Activated CD4-positive, alpha-beta memory T cell treated with anti-CD3 and anti-CD28 coated beads, Interleukin-2, amount 10 ng/mL, durations not matched to agents 7 days and 5 days (primary cell): ENCODE measurements at regions of chr1 and their contacts with region 1.

Region 1: GRCh38 chr1:108559215-108560186 is at the start of gene EEIG2:
- DNase-seq: peak; percentile 93
- H3K4me3 Mint-ChIP-seq: peak within 1 kb of the TSS; percentile 95
- H3K27ac Mint-ChIP-seq: peak within 1 kb of the TSS; percentile 86
- H3K4me1 Mint-ChIP-seq: peaks cover 34% of the 10 kb centered on the region
- H3K27me3 Mint-ChIP-seq: peaks cover 12% of the 10 kb centered on the region
- total RNA-seq, gene EEIG2: 22.6 to 23.6 TPM

Region 2: GRCh38 chr1:108141621-108142020 is 417.9 kb before region 1 on chr1:
- CTCF ChIA-PET with region 1: no interaction called
- POLR2A ChIA-PET with region 1: no interaction called
- DNase-seq: no peak
- H3K4me3 Mint-ChIP-seq: no peak overlapping the region
- H3K27ac Mint-ChIP-seq: no peak overlapping the region
- H3K4me1 Mint-ChIP-seq: no peaks in the 10 kb centered on the region
- H3K27me3 Mint-ChIP-seq: no peaks in the 10 kb centered on the region

Region 3: GRCh38 chr1:108199781-108200570 is 359.5 kb before region 1 on chr1 and contains the start of gene SLC25A24:
- CTCF ChIA-PET with region 1: interaction called, 24 read pairs
- POLR2A ChIA-PET with region 1: interaction called, 23 read pairs
- DNase-seq: peak; percentile 86
- H3K4me3 Mint-ChIP-seq: peak within 1 kb of the TSS; percentile 84
- H3K27ac Mint-ChIP-seq: peak within 1 kb of the TSS; percentile 78
- H3K4me1 Mint-ChIP-seq: peaks cover 38% of the 10 kb centered on the region
- H3K27me3 Mint-ChIP-seq: peaks cover 7% of the 10 kb centered on the region
- total RNA-seq, gene SLC25A24: 32.5 to 33.2 TPM

Region 4: GRCh38 chr1:108504447-108504846 is 55.1 kb before region 1 on chr1:
- CTCF ChIA-PET with region 1: interaction called, 18 read pairs
- POLR2A ChIA-PET with region 1: interaction called, 11 read pairs
- DNase-seq: no peak
- H3K4me3 Mint-ChIP-seq: no peak overlapping the region
- H3K27ac Mint-ChIP-seq: no peak overlapping the region
- H3K4me1 Mint-ChIP-seq: no peaks in the 10 kb centered on the region
- H3K27me3 Mint-ChIP-seq: peaks cover 41% of the 10 kb centered on the region

Region 5: DNA sequence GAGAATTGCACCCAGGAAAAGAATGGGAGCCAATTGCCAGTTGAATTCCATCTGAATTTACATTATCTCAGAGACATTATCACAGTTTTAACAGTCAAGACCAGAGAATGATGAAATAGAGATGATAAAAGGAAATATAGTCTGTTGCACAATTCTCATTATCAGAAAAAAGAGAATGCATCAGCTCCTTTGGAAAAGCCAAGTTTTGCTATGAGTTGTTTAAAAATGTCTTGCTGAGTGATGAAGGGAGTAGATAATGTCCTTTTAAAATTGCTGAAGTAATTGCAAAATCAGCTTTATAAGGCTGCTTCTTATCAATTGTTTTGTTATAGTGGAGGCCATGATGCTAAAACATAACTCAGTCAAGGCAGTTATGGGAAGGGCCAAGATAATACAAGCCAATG is 37.5 kb before region 1 on chr1:
- CTCF ChIA-PET with region 1: interaction called, 79 read pairs
- POLR2A ChIA-PET with region 1: interaction called, 10 read pairs
- DNase-seq: no peak
- H3K4me3 Mint-ChIP-seq: no peak overlapping the region
- H3K27ac Mint-ChIP-seq: no peak overlapping the region
- H3K4me1 Mint-ChIP-seq: no peaks in the 10 kb centered on the region
- H3K27me3 Mint-ChIP-seq: peaks cover 30% of the 10 kb centered on the region

Region 6: DNA sequence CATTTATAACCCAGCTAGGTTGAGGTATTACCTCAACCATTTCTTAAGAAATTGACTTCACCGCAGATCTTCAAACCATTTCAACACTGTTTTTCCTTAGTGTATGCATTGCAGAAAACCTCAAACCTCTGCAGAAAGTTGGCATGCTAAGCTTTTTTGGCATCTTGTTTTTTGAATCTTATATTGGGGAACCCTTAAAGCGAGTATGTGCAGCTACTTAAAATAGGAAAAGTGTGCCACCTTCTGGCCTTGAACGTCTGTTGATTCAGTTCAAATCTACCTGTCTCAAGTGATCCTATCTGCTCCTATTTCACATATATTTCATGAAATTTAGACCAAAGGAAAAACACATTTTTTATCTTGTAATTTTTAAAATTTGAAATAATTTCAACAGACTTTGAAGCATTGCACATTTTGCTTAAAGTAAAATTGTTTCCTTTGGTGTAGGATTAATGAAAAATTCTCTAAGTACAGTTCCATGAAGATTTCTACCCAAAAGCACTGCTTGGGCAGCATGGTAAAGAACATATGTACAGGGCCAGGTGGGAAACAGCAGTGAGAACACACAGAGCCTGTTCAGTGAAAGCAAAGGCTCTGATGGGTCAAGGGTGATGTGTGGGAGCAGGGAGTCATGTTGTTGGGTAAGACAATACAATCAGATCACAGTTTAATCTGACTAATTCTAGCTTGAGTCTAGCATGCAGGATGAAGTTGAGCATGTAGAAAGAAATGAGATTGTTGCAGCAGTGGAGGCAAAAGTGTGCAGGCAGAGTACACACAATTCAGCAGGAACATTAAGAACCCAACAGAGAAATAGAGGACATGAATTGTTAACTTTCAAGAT is 84.2 kb after region 1 on chr1:
- CTCF ChIA-PET with region 1: interaction called, 105 read pairs
- POLR2A ChIA-PET with region 1: interaction called, 78 read pairs
- DNase-seq: peak; percentile 60
- H3K4me3 Mint-ChIP-seq: peak overlapping the region; percentile 8
- H3K27ac Mint-ChIP-seq: peak overlapping the region; percentile 98
- H3K4me1 Mint-ChIP-seq: peaks cover 76% of the 10 kb centered on the region
- H3K27me3 Mint-ChIP-seq: no peaks in the 10 kb centered on the region

Region 7: DNA sequence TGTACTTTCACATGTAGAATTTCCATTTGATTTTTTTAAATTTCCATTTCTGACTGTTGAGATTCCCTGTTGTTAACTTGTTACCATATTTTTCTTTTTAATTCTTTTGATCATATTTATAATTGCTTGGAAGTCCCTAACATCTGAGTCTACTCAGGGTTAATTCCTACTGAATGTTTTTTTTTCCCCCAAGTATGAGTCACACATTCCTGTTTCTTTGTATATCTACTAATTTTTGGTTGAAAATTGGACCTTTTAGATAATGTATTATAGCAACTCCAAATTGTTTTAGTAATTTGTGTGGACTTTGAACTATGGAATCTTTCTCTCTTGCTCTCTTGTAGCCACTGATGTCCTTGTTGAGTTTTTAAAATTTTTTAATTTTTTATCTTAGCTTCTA is 241.6 kb after region 1 on chr1:
- CTCF ChIA-PET with region 1: no interaction called
- POLR2A ChIA-PET with region 1: no interaction called
- DNase-seq: no peak
- H3K4me3 Mint-ChIP-seq: no peak overlapping the region
- H3K27ac Mint-ChIP-seq: no peak overlapping the region
- H3K4me1 Mint-ChIP-seq: no peaks in the 10 kb centered on the region
- H3K27me3 Mint-ChIP-seq: no peaks in the 10 kb centered on the region

Region 8: DNA sequence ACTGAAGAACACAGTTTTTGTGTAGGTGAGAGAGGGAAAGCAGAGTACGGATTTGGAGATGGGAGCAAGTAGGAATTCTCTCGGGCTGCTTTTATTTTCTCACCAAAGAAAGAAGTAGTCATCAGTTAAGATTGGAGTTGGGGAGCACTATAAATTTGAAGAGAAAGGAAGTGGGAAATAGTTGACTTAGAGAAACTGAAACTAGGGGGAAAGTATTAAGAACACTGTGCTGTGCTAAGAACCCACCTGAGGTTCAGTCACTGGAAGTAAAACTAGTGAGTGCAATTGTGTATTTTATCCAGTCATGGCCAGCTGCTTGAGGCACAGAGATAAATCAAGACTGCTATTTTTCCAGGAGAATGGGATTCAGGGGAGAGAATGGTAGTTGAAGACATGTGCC is 366.4 kb after region 1 on chr1:
- CTCF ChIA-PET with region 1: no interaction called
- POLR2A ChIA-PET with region 1: no interaction called
- DNase-seq: no peak
- H3K4me3 Mint-ChIP-seq: no peak overlapping the region
- H3K27ac Mint-ChIP-seq: no peak overlapping the region
- H3K4me1 Mint-ChIP-seq: peaks cover 2% of the 10 kb centered on the region
- H3K27me3 Mint-ChIP-seq: no peaks in the 10 kb centered on the region